ENCODE measurements at regions of chr5 and their contacts with region 1.

Region 1: GRCh38 chr5:163459922-163460766 is at the starts of genes HMMR and NUDCD2:
- DNase-seq: peak; percentile 98
- ATAC-seq: peak; percentile 92
- H3K4me3 ChIP-seq: peak within 1 kb of the TSS; percentile 88 to 98
- H3K27ac ChIP-seq: peak within 1 kb of the TSS; percentile 99
- H3K4me1 ChIP-seq: peaks cover 19% of the 10 kb centered on the region; the same call in 1 of the 2 replicates
- H3K27me3 ChIP-seq: no peaks in the 10 kb centered on the region
- CTCF ChIP-seq: no peak; the same call in 1 of the 2 replicates
- total RNA-seq, gene HMMR: 42.5 TPM
- total RNA-seq, gene NUDCD2: 58.6 TPM

Region 2: DNA sequence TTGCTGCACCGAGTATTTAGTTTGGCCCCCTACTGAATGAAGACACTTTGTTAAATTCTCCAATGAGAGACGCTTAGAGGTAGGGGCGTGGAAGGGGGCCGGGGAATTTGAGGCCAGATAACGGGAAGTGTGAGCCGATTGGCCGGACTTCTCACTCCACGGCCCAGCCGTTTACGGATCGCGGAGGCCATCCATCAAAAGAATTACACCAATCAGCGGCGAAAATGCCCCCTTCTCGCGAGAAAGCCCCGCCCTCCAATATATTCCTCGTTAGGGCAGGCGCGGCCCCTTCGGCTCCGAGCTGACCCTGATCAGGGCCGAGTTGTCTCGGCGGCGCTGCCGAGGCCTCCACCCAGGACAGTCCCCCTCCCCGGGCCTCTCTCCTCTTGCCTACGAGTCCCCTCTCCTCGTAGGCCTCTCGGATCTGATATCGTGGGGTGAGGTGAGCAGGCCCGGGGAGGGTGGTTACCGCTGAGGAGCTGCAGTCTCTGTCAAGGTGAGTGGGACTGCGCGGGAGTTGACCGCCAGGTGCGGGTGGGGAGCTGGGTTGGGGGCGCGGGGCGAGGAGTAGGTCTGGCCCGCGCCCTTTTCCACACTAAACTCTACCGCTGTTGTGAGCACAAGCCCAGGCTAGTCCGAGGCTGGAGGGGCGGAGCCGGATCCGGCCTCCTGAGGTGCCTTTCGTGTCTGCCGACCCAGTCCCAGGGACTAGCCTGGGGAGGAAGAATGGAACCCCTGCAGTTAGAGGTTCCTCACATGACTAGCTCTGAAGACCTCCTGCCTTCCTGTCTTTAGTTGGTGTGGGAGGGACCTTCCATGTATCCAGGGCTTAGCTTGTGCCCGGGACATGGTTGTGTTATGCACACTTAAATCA is 22.6 kb before region 1 on chr5 and contains the start of gene CCNG1:
- CTCF ChIA-PET with region 1: no interaction called
- POLR2A ChIA-PET with region 1: interaction called, 12 read pairs
- in situ Hi-C with region 1: no loop called
- intact Hi-C with region 1: no loop called
- DNase-seq: peak; percentile 84
- ATAC-seq: peak; percentile 97
- H3K4me3 ChIP-seq: peak within 1 kb of the TSS; percentile 81 to 97
- H3K27ac ChIP-seq: peak within 1 kb of the TSS; percentile 94
- H3K4me1 ChIP-seq: peaks cover 30% of the 10 kb centered on the region
- H3K27me3 ChIP-seq: no peaks in the 10 kb centered on the region
- CTCF ChIP-seq: no peak
- total RNA-seq, gene CCNG1: 117 TPM

Region 3: GRCh38 chr5:163445345-163445744 is 14.8 kb before region 1 on chr5:
- CTCF ChIA-PET with region 1: no interaction called
- POLR2A ChIA-PET with region 1: interaction called, 24 read pairs
- in situ Hi-C with region 1: no loop called
- intact Hi-C with region 1: no loop called
- DNase-seq: no peak
- ATAC-seq: no peak
- H3K4me3 ChIP-seq: no peak overlapping the region
- H3K27ac ChIP-seq: no peak overlapping the region
- H3K4me1 ChIP-seq: peaks cover under 1% of the 10 kb centered on the region; the same call in 1 of the 2 replicates
- H3K27me3 ChIP-seq: no peaks in the 10 kb centered on the region
- CTCF ChIP-seq: no peak

Region 4: DNA sequence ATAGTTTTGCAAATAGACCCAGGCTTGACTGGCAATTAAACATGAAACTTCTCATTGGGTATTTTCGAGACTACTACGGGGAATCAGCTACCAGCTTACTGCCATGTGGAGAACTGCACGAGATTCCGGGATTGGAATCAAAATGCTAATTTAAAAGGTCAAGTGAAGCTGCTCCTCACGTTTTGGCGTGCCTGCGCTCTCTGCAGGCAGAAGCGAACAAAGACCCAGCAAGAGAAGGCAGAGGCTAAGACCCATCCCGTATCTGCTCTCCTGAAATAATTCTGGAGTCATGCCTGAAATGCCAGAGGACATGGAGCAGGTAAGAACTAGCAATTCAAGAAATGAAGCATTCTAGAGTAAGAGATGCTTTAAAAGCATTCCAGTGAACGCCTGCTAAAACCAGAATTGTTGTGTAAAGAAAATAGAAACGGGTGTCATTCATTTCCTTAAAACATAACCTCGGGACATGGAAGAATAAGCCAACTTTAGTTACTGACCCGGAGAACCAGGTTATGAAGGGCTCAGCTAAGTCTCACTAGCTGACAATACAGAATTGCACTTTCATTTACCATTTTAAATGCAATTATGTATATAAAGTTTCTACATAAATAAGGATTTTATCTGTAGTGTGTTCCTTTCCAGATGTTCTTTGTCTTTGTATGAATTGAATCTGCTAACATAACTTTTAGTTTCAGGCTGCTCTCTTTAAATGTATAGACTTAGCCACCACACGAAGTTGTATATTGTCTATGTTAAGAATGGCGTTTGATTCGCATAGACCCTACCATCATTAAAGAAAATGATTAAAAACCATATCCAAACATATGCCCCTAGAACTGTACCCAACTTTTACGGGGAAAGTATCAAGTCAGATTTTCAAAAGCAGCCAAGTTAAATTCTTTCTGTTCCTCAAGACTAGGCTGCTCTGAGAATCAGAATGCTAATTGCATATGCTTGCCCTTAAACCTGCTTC is 43.2 kb after region 1 on chr5:
- CTCF ChIA-PET with region 1: no interaction called
- POLR2A ChIA-PET with region 1: interaction called, 12 read pairs
- in situ Hi-C with region 1: no loop called
- intact Hi-C with region 1: no loop called
- DNase-seq: no peak
- ATAC-seq: 0 out of 2 replicates have a peak, but pooled peaks have one; percentile 7
- H3K4me3 ChIP-seq: peak overlapping the region; percentile 88 to 94
- H3K27ac ChIP-seq: peak overlapping the region; percentile 99
- H3K4me1 ChIP-seq: peaks cover 18% of the 10 kb centered on the region; the same call in 1 of the 2 replicates
- H3K27me3 ChIP-seq: no peaks in the 10 kb centered on the region
- CTCF ChIP-seq: peak; percentile 58

Measured in Panc1 (cell line).